ENCODE measurements at regions of chr18 and their contacts with region 1.

Region 1: GRCh38 chr18:34661464-34662111 is 48.5 kb upstream of the DTNA start:
- DNase-seq: no peak
- H3K4me3 ChIP-seq: no peak overlapping the region
- H3K27ac ChIP-seq: no peak overlapping the region
- H3K4me1 ChIP-seq: no peaks in the 10 kb centered on the region
- H3K27me3 ChIP-seq: no peaks in the 10 kb centered on the region
- CTCF ChIP-seq: peak; percentile 47 to 53 (median 50)
- POLR2A ChIP-seq: no peak

Region 2: DNA sequence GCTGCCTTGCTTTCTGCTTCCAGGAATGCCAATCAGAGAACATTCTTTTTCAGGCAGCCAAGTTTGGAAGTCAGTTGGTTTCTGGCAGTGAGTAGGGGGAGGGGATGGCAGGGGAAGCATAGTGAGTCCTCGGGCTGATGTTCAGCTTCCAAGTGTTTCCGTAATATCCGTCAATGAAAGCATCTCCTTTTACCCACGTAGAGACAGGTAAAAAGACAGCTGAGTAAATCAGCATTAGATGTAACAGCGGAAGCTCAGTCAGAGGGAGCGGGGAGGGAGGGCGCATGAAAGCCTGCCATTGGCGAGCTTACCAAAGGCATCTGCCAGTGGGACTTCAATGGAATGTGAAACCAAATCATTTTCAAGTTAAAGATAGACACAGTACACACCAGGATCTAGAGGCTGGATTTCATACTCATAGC is 68.6 kb before region 1 on chr18:
- intact Hi-C with region 1: loop called (anchors 5 kb)
- DNase-seq: peak; percentile 14
- H3K4me3 ChIP-seq: no peak overlapping the region
- H3K27ac ChIP-seq: peak overlapping the region; percentile 15 to 42
- H3K4me1 ChIP-seq: no peaks in the 10 kb centered on the region
- H3K27me3 ChIP-seq: no peaks in the 10 kb centered on the region
- CTCF ChIP-seq: no peak
- POLR2A ChIP-seq: no peak